ENCODE measurements at regions of chr3 and their contacts with region 1.

Region 1: GRCh38 chr3:172461530-172462138 is 13.4 kb upstream of the GHSR start:
- DNase-seq: no peak
- ATAC-seq: peak; percentile 78; the same call in 1 of the 2 replicates
- H3K4me3 Mint-ChIP-seq: no peak overlapping the region
- H3K27ac Mint-ChIP-seq: no peak overlapping the region
- H3K4me1 Mint-ChIP-seq: no peaks in the 10 kb centered on the region
- H3K27me3 Mint-ChIP-seq: no peaks in the 10 kb centered on the region
- CTCF ChIP-seq: peak; percentile 84

Region 2: DNA sequence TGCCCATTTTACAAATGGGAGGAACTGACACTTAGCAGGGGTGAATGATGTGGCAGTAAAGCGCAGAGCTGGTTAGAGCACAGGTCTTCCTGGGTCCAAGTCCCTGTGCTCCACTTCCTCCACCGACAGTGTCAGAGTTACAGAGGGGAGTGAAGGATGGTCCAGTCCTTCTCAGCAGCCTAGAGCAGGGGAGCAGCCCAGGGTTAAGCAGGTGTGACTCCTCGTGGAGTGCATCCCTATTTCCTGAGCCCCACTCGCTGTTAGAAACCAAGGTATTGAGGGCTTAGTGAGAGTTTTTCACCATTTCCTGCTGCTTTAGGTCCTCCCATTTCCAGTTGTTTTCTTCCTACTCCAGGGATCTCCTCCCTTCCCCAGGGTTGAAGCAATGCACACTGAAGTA is 88.7 kb before region 1 on chr3:
- CTCF ChIA-PET with region 1: no interaction called
- POLR2A ChIA-PET with region 1: no interaction called
- DNase-seq: no peak
- ATAC-seq: no peak
- H3K4me3 Mint-ChIP-seq: no peak overlapping the region
- H3K27ac Mint-ChIP-seq: no peak overlapping the region
- H3K4me1 Mint-ChIP-seq: peaks cover 8% of the 10 kb centered on the region
- H3K27me3 Mint-ChIP-seq: no peaks in the 10 kb centered on the region
- CTCF ChIP-seq: no peak

Region 3: GRCh38 chr3:172449466-172450149 is 12.0 kb before region 1 on chr3:
- CTCF ChIA-PET with region 1: interaction called, 20 read pairs
- POLR2A ChIA-PET with region 1: interaction called, 3 read pairs
- DNase-seq: peak; percentile 83
- ATAC-seq: peak; percentile 82
- H3K4me3 Mint-ChIP-seq: peak overlapping the region; percentile 68
- H3K27ac Mint-ChIP-seq: no peak overlapping the region
- H3K4me1 Mint-ChIP-seq: peaks cover 29% of the 10 kb centered on the region
- H3K27me3 Mint-ChIP-seq: peaks cover 73% of the 10 kb centered on the region
- CTCF ChIP-seq: peak; percentile 27; the same call in 1 of the 2 replicates

Region 4: DNA sequence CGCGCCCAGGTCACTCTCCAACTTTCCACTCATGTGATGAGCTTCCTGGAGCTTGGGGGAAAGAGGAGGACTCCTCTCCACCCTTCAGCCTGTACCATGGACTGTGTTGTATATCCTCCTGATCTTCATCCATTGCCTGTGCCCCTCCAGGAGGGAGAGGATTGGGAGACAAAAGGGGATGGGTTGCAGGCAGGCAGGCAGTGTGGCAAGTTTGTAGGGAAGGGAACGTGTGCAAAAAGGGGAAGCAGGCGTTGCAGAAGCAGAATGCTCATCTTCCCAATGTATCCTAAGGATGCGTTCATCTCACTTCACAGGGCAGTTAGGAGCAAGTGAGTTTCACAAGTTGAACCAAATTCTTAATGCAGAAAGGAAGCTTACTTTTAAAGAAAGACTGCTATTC is 14.7 kb after region 1 on chr3:
- CTCF ChIA-PET with region 1: interaction called, 23 read pairs
- POLR2A ChIA-PET with region 1: no interaction called
- DNase-seq: no peak
- ATAC-seq: no peak
- H3K4me3 Mint-ChIP-seq: no peak overlapping the region
- H3K27ac Mint-ChIP-seq: no peak overlapping the region
- H3K4me1 Mint-ChIP-seq: peaks cover 20% of the 10 kb centered on the region
- H3K27me3 Mint-ChIP-seq: no peaks in the 10 kb centered on the region
- CTCF ChIP-seq: no peak

Region 5: GRCh38 chr3:172595641-172596393 is 134.2 kb after region 1 on chr3:
- CTCF ChIA-PET with region 1: interaction called, 15 read pairs
- POLR2A ChIA-PET with region 1: no interaction called
- DNase-seq: no peak
- ATAC-seq: peak; percentile 73
- H3K4me3 Mint-ChIP-seq: no peak overlapping the region
- H3K27ac Mint-ChIP-seq: no peak overlapping the region
- H3K4me1 Mint-ChIP-seq: no peaks in the 10 kb centered on the region
- H3K27me3 Mint-ChIP-seq: no peaks in the 10 kb centered on the region
- CTCF ChIP-seq: peak; percentile 39; the same call in 1 of the 2 replicates

Measured in WTC11 (cell line).